Activated naive CD4-positive, alpha-beta T cell treated with anti-CD3 and anti-CD28 coated beads for 36 hours (primary cell): ENCODE measurements at regions of chr7 and their contacts with region 1.

Region 1: DNA sequence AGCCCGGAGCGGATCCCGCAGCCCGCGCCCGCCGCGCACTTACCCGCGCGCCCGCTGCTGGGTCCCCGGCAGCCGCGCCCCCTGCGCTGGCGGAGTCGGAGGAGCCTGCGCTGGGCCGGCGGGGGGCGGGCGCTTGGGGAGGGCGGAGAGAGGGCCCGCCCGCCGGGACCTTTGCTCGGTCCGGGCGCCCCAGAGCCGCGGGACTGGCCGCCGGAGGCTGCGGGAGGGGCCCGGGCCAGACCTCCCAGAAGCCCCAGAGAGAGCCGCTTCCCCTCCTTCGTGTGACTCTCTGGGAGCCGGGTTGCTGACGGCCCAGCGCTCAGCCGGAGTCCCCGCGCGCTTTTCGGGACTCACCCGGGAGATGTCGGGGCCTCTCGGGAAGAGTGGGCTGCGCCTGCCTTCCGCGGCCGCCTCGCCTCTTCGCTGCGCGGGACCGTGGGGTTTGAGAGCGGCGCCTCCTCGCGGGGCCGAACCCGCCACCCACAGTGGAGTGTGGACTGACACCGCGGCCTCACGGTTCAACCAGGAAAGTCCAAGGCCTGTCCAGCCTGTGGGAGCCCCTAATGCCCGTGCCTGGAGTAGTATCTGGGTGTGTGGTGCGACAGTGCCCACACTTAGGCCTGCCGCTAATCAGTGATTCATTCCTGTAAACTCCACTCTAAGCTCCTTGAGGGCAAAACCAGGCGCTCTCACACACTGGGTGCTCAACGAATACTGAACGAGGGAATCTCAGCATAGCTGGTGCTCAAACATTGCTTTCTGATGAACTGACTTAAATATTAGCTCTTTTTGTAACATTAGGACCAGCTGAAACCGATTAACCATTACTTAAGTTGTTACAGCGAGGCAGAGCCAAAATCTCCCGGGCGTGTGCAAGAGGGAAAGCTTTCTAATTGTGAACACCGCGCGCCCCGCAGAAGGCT is at the start of gene GSDME:
- DNase-seq: no peak
- H3K4me3 Mint-ChIP-seq: peak within 1 kb of the TSS; percentile 85
- H3K27ac Mint-ChIP-seq: peak within 1 kb of the TSS; percentile 88
- H3K4me1 Mint-ChIP-seq: peaks cover 33% of the 10 kb centered on the region
- H3K27me3 Mint-ChIP-seq: peaks cover 39% of the 10 kb centered on the region
- total RNA-seq, gene GSDME: 6.8 to 6.9 TPM

Region 2: DNA sequence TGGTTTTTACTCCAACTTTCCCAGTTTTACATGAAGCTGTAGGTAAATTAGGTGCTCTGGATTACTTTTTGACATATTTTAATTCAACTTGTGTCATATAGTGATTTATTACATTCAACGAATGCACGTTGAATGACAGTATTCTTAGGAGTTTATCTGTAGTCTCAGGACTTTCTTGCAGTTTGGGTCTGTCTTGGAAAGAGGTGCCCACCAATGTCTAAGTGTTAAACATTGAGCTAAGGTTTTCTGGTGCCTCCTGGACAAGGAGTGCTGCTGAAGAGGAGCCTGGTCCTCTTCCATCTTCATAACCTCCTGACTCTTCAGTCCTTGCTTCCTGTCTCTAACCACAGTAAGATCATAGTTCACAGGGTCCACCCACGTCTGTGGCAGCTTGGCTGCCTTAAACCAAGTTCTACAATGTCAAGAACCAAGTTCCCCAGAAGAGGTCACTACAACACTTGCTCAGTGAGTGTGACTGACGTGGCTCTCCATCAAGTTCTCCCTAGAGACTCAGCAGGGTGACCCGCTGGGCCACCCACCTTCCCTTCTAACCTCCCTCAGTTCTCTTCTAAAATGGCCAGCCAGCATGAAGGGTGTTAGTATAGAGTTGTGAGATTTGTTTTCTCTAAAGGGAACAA is 467.5 kb before region 1 on chr7:
- CTCF ChIA-PET with region 1: interaction called, 3 read pairs
- intact Hi-C with region 1: loop called (anchors 2 kb)
- DNase-seq: peak; percentile 74
- H3K4me3 Mint-ChIP-seq: no peak overlapping the region
- H3K27ac Mint-ChIP-seq: no peak overlapping the region
- H3K4me1 Mint-ChIP-seq: peaks cover 12% of the 10 kb centered on the region
- H3K27me3 Mint-ChIP-seq: peaks cover 29% of the 10 kb centered on the region

Region 3: GRCh38 chr7:24778543-24779282 is 21.1 kb after region 1 on chr7:
- CTCF ChIA-PET with region 1: no interaction called
- intact Hi-C with region 1: loop called (anchors 1 kb)
- DNase-seq: peak; percentile 58
- H3K4me3 Mint-ChIP-seq: no peak overlapping the region
- H3K27ac Mint-ChIP-seq: peak overlapping the region; percentile 60
- H3K4me1 Mint-ChIP-seq: peaks cover 12% of the 10 kb centered on the region
- H3K27me3 Mint-ChIP-seq: peaks cover 2% of the 10 kb centered on the region

Region 4: GRCh38 chr7:25028370-25029021 is 270.9 kb after region 1 on chr7:
- CTCF ChIA-PET with region 1: no interaction called
- intact Hi-C with region 1: loop called (anchors 1 kb)
- DNase-seq: peak; percentile 38
- H3K4me3 Mint-ChIP-seq: no peak overlapping the region
- H3K27ac Mint-ChIP-seq: peak overlapping the region; percentile 79
- H3K4me1 Mint-ChIP-seq: peaks cover 37% of the 10 kb centered on the region
- H3K27me3 Mint-ChIP-seq: no peaks in the 10 kb centered on the region

Region 5: GRCh38 chr7:25075459-25075858 is 317.8 kb after region 1 on chr7:
- CTCF ChIA-PET with region 1: no interaction called
- intact Hi-C with region 1: loop called (anchors 5 kb)
- DNase-seq: peak; percentile 71
- H3K4me3 Mint-ChIP-seq: no peak overlapping the region
- H3K27ac Mint-ChIP-seq: no peak overlapping the region
- H3K4me1 Mint-ChIP-seq: peaks cover 16% of the 10 kb centered on the region
- H3K27me3 Mint-ChIP-seq: peaks cover 4% of the 10 kb centered on the region